ENCODE measurements at regions of chr1 and their contacts with region 1.

Region 1: DNA sequence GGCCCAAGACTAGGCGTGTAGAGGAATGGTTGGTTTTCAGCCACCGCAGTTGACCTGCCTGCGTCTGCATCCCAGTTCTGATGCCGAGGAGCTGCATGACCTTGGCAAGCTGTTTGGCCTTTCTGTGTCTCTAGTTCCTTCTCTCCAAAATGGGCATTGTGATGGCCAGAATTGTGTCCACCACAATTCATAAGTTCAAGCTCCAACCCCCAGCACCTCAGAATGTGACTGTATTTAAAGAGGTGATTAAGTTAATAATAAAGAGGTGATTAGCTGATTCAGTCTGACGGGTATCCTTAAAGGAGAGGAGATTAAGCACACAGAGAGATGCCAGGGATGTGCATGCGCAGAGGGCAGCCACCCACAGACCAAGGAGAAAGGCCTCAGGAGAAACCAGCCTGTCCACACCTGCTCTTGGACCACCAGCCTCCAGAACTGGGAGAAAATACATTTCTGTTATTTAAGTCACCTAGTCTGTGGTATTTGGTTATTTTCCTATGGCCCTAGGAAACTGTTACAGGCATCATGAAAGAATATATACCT is 28.5 kb downstream of the MAB21L3 start:
- DNase-seq: no peak
- H3K4me3 ChIP-seq: no peak overlapping the region
- H3K27ac ChIP-seq: no peak overlapping the region
- H3K4me1 ChIP-seq: peaks cover 2% of the 10 kb centered on the region
- H3K27me3 ChIP-seq: peaks cover 0 to 10% of the 10 kb centered on the region in 2 experiments
- CTCF ChIP-seq: no peak
- POLR2A ChIP-seq: no peak

Region 2: GRCh38 chr1:116122955-116123757 is 16.5 kb before region 1 on chr1:
- CTCF ChIA-PET with region 1: interaction called, 12 read pairs
- POLR2A ChIA-PET with region 1: no interaction called
- dilution Hi-C with region 1: no loop called
- intact Hi-C with region 1: no loop called
- DNase-seq: no peak
- H3K4me3 ChIP-seq: no peak overlapping the region
- H3K27ac ChIP-seq: no peak overlapping the region
- H3K4me1 ChIP-seq: no peaks in the 10 kb centered on the region
- H3K27me3 ChIP-seq: peaks cover 0 to 4% of the 10 kb centered on the region in 2 experiments
- CTCF ChIP-seq: no peak
- POLR2A ChIP-seq: no peak

Region 3: DNA sequence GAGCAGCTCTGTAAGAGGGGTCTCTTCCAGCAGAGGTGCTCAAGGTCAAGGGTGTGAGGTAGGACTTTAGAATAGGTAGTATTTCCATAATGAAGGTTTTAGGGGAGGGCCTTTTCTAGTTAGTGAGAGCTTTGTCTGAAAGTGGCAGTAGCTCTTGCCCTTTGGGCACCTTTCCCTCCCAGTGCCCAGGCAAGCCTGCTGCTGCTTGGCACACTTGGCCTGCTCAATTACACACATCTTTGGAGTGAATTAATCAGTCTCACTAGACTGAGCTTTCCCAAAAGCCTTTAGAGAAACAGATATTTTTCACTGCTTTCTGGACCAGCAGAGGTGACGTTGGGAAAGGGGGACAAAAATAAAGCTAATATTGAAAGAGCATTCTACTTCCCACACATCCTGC is 19.5 kb after region 1 on chr1:
- CTCF ChIA-PET with region 1: interaction called, 16 read pairs
- POLR2A ChIA-PET with region 1: no interaction called
- dilution Hi-C with region 1: no loop called
- intact Hi-C with region 1: no loop called
- DNase-seq: no peak
- H3K4me3 ChIP-seq: no peak overlapping the region
- H3K27ac ChIP-seq: no peak overlapping the region
- H3K4me1 ChIP-seq: no peaks in the 10 kb centered on the region
- H3K27me3 ChIP-seq: peaks cover 16 to 18% of the 10 kb centered on the region in 2 experiments
- CTCF ChIP-seq: no peak
- POLR2A ChIP-seq: no peak

Region 4: DNA sequence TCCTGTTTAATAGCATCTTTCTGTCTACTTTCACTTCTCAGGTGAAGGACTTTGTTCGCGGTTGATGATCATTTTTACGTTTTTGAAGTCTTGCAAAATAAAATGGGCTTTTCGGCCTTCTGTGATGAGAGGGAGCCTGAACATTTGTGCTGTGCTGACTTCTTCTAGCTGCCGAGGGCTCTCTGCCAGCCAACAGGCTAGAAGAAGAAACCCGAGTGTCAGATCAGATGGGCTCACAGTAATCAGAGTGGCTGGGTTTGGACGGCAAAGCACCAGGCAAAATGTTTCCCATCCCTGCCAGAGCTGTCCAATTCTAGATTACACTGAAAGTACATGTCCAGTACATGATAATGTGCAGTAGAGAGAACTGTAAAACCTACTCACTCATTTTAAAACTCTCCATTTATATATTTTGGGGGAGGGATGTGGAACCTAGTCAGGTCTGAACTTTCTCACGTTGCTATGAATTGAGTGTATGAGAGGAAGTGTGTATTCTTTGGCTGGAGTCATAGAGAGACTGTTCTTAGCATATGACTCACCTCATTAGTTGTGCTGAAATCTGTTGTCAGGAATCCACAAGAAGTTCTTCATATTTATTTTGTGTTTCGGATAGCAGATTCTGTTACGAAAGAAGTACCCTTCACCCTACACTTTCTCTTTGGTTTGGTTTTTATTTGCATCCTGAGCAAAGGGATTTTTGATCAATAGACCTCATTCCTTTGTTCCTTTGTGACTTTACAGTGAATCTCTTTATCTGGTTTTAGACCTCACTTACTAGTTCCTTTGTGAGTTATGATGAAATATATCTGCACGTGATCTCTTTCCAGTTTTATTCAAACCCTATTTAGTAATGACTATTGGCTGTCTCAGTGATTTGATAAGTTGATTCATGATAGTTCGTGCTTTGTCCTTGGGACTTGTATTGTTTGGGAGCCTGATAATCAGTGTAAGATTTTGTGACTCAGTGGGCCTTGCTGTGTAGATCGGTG is 238.2 kb after region 1 on chr1:
- CTCF ChIA-PET with region 1: interaction called, 16 read pairs
- POLR2A ChIA-PET with region 1: no interaction called
- dilution Hi-C with region 1: no loop called
- intact Hi-C with region 1: no loop called
- DNase-seq: peak; percentile 94
- H3K4me3 ChIP-seq: peak overlapping the region in 1 of 3 experiments; percentile 94
- H3K27ac ChIP-seq: peak overlapping the region; percentile 96
- H3K4me1 ChIP-seq: peaks cover 70% of the 10 kb centered on the region
- H3K27me3 ChIP-seq: no peaks in the 10 kb centered on the region
- CTCF ChIP-seq: no peak
- POLR2A ChIP-seq: no peak

Region 5: GRCh38 chr1:116504308-116505156 is 364.9 kb after region 1 on chr1:
- CTCF ChIA-PET with region 1: interaction called, 479 read pairs
- POLR2A ChIA-PET with region 1: interaction called, 4 read pairs
- dilution Hi-C with region 1: no loop called
- intact Hi-C with region 1: loop called (anchors 1 kb)
- DNase-seq: no peak
- H3K4me3 ChIP-seq: no peak overlapping the region
- H3K27ac ChIP-seq: no peak overlapping the region
- H3K4me1 ChIP-seq: peaks cover 22% of the 10 kb centered on the region
- H3K27me3 ChIP-seq: no peaks in the 10 kb centered on the region
- CTCF ChIP-seq: no peak
- POLR2A ChIP-seq: no peak